ENCODE measurements at regions of chr5 and their contacts with region 1.

Region 1: GRCh38 chr5:142797420-142797819 is 27.2 kb downstream of the ARHGAP26 start:
- DNase-seq: no peak
- H3K4me3 ChIP-seq: no peak overlapping the region
- H3K4me3 Mint-ChIP-seq: peak overlapping the region; percentile 60
- H3K27ac Mint-ChIP-seq: peak overlapping the region; percentile 67
- H3K4me1 ChIP-seq: peaks cover 54% of the 10 kb centered on the region
- H3K4me1 Mint-ChIP-seq: peaks cover 59% of the 10 kb centered on the region
- H3K27me3 ChIP-seq: no peaks in the 10 kb centered on the region
- H3K27me3 Mint-ChIP-seq: no peaks in the 10 kb centered on the region
- CTCF ChIP-seq: peak; percentile 17 to 18

Region 2: GRCh38 chr5:142807372-142807911 is 10.0 kb after region 1 on chr5:
- CTCF ChIA-PET with region 1: interaction called, 5 read pairs
- POLR2A ChIA-PET with region 1: no interaction called
- intact Hi-C with region 1: loop called (anchors 1 kb)
- DNase-seq: peak; percentile 16 to 44
- H3K4me3 ChIP-seq: no peak overlapping the region
- H3K4me3 Mint-ChIP-seq: no peak overlapping the region
- H3K27ac Mint-ChIP-seq: peak overlapping the region; percentile 32
- H3K4me1 ChIP-seq: peaks cover 33% of the 10 kb centered on the region
- H3K4me1 Mint-ChIP-seq: peaks cover 42% of the 10 kb centered on the region
- H3K27me3 ChIP-seq: no peaks in the 10 kb centered on the region
- H3K27me3 Mint-ChIP-seq: no peaks in the 10 kb centered on the region
- CTCF ChIP-seq: no peak

Region 3: GRCh38 chr5:142821733-142822487 is 24.5 kb after region 1 on chr5:
- CTCF ChIA-PET with region 1: interaction called, 4 read pairs
- POLR2A ChIA-PET with region 1: no interaction called
- intact Hi-C with region 1: loop called (anchors 1 kb)
- DNase-seq: peak; percentile 38 to 48
- H3K4me3 ChIP-seq: no peak overlapping the region
- H3K4me3 Mint-ChIP-seq: peak overlapping the region; percentile 30
- H3K27ac Mint-ChIP-seq: peak overlapping the region; percentile 60
- H3K4me1 ChIP-seq: peaks cover 91% of the 10 kb centered on the region
- H3K4me1 Mint-ChIP-seq: peaks cover 60% of the 10 kb centered on the region
- H3K27me3 ChIP-seq: no peaks in the 10 kb centered on the region
- H3K27me3 Mint-ChIP-seq: no peaks in the 10 kb centered on the region
- CTCF ChIP-seq: no peak

Region 4: DNA sequence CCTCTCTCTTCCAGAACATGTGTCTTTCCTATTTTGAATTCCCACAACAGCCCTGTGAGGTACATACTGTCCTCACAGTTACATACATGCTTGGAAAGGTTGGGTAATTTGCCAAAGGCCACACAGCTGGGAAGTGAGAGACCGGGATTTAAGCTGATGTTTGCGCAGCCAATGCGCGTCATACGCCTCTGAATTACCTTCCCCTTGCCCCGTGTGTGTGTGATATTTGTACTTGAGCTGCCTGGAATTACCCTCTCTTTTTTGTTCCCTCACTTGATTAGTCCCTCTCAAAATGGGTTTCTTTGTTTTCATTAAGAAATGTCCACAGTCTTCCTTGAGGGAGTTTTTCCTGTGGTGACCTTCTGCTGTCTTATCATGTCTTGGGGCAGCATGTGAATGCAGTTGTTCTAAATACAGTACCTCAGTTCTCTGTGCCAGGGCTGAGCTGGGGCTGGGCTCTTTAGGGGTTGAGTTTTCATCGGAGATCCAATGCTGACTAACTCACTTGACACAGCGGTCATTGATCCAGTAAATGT is 67.4 kb after region 1 on chr5:
- CTCF ChIA-PET with region 1: interaction called, 9 read pairs
- POLR2A ChIA-PET with region 1: no interaction called
- intact Hi-C with region 1: loop called (anchors 1 kb)
- DNase-seq: peak in 1 of 2 experiments; percentile 30
- H3K4me3 ChIP-seq: no peak overlapping the region
- H3K4me3 Mint-ChIP-seq: no peak overlapping the region
- H3K27ac Mint-ChIP-seq: peak overlapping the region; percentile 20
- H3K4me1 ChIP-seq: peaks cover 50% of the 10 kb centered on the region
- H3K4me1 Mint-ChIP-seq: peaks cover 39% of the 10 kb centered on the region
- H3K27me3 ChIP-seq: no peaks in the 10 kb centered on the region
- H3K27me3 Mint-ChIP-seq: no peaks in the 10 kb centered on the region
- CTCF ChIP-seq: no peak

Region 5: GRCh38 chr5:143008809-143009521 is 211.5 kb after region 1 on chr5:
- CTCF ChIA-PET with region 1: no interaction called
- POLR2A ChIA-PET with region 1: no interaction called
- intact Hi-C with region 1: no loop called
- DNase-seq: no peak
- H3K4me3 ChIP-seq: no peak overlapping the region
- H3K4me3 Mint-ChIP-seq: no peak overlapping the region
- H3K27ac Mint-ChIP-seq: no peak overlapping the region
- H3K4me1 ChIP-seq: peaks cover 28% of the 10 kb centered on the region
- H3K4me1 Mint-ChIP-seq: peaks cover 15% of the 10 kb centered on the region
- H3K27me3 ChIP-seq: no peaks in the 10 kb centered on the region
- H3K27me3 Mint-ChIP-seq: no peaks in the 10 kb centered on the region
- CTCF ChIP-seq: no peak

Measured in Caco-2 (cell line).